Right cardiac atrium (tissue), 5 donors: ENCODE measurements at regions of chr17 and their contacts with region 1.

Region 1: GRCh38 chr17:49861150-49861892 is 13.5 kb upstream of the TAC4 start:
- DNase-seq: peak; percentile 44 to 70 (median 68)
- ATAC-seq: peak in 1 of 2 donors; percentile 39
- H3K4me3 ChIP-seq: no peak overlapping the region
- H3K27ac ChIP-seq: no peak overlapping the region
- H3K4me1 ChIP-seq: no peaks in the 10 kb centered on the region
- H3K27me3 ChIP-seq: no peaks in the 10 kb centered on the region

Region 2: GRCh38 chr17:50087246-50087911 is 226.1 kb after region 1 on chr17:
- intact Hi-C with region 1: loop called in 1 of 4 experiments (anchors 10 kb)
- DNase-seq: peak; percentile 73 to 88 (median 85)
- ATAC-seq: peak; percentile 80 to 88
- H3K4me3 ChIP-seq: no peak overlapping the region
- H3K27ac ChIP-seq: no peak overlapping the region
- H3K4me1 ChIP-seq: no peaks in the 10 kb centered on the region
- H3K27me3 ChIP-seq: no peaks in the 10 kb centered on the region